Activated CD4-positive, alpha-beta memory T cell treated with anti-CD3 and anti-CD28 coated beads for 36 hours (primary cell): ENCODE measurements at regions of chr11 and their contacts with region 1.

Region 1: DNA sequence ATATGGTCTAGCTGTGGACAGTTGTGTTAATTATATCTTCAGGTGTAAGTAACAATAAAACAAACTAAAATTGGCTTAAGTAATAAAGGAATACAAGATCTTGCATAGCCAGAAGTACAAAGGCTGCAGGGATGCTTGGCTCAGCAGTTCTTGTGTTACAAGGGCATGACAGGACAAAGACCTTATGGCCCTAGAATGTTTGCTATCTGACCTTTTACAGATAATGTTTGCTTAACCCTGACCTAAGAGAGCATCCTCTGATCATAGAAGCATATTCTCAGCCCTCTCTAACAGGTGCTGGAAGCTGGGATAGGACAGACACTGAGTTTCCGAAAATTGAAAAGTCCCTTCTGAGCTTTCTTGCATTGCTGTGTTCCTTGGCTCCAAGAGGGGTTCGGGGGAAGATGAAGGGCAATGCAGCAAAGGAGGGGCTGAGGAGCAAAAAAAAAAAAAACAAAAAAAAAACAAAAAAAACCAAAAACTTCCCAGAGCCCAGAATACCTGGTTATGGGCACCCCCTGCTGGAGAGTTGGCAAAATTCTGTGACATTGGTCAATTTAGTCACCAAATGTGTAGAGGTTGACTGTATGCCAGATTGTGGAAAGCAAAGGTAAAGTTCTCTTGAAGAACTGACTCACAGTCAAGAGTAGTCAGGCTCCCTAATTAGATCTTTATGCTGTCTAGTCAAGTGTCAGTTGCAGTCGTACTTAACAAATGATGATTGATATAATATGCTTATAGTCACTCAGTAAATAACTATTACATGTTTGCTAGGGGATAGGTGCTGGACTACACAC is 10.4 kb upstream of the HIKESHI start:
- DNase-seq: peak; percentile 82
- H3K4me3 Mint-ChIP-seq: peak overlapping the region; percentile 30
- H3K27ac Mint-ChIP-seq: peak overlapping the region; percentile 95
- H3K4me1 Mint-ChIP-seq: peaks cover 68% of the 10 kb centered on the region
- H3K27me3 Mint-ChIP-seq: no peaks in the 10 kb centered on the region

Region 2: GRCh38 chr11:85947431-85948272 is 344.0 kb before region 1 on chr11:
- CTCF ChIA-PET with region 1: no interaction called
- POLR2A ChIA-PET with region 1: interaction called, 5 read pairs
- intact Hi-C with region 1: loop called (anchors 1 kb)
- DNase-seq: peak; percentile 59
- H3K4me3 Mint-ChIP-seq: peak overlapping the region; percentile 30
- H3K27ac Mint-ChIP-seq: peak overlapping the region; percentile 78
- H3K4me1 Mint-ChIP-seq: peaks cover 46% of the 10 kb centered on the region
- H3K27me3 Mint-ChIP-seq: no peaks in the 10 kb centered on the region

Region 3: DNA sequence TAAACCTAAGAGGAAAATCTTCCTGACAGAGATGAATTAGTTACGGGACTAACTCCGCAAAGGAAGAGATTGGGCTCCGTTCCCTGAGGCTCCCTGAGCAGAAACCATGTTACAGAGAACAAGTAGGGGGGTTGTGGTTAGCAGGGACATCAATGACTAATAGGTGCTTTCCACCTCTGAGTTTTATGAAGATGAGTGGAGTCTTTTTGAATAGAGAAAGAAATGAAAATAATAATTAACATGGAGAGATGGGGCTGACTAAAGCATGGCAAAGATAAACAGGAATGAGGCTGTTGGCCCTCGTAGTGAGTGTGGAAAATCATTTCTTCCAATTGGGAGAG is 175.3 kb before region 1 on chr11:
- CTCF ChIA-PET with region 1: no interaction called
- POLR2A ChIA-PET with region 1: interaction called, 3 read pairs
- intact Hi-C with region 1: loop called (anchors 1 kb)
- DNase-seq: peak; percentile 59
- H3K4me3 Mint-ChIP-seq: peak overlapping the region; percentile 40
- H3K27ac Mint-ChIP-seq: peak overlapping the region; percentile 44
- H3K4me1 Mint-ChIP-seq: peaks cover 34% of the 10 kb centered on the region
- H3K27me3 Mint-ChIP-seq: peaks cover 2% of the 10 kb centered on the region

Region 4: DNA sequence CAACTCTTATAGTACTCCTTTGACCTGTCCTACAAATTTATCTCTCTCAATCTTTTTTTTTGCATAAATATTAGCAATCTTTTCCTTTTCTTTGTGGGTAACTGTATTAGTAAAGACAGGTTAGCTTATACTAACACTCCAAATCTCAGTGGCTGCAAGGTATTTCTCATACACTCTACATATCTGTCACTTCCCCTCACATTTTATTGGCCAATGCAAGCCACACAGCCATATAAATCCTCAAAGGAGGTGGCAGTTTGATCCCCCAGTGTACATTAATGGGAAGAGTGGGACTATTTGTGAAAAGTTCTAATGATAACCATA is 89.7 kb before region 1 on chr11:
- CTCF ChIA-PET with region 1: interaction called, 3 read pairs
- POLR2A ChIA-PET with region 1: interaction called, 3 read pairs
- intact Hi-C with region 1: loop called (anchors 1 kb)
- DNase-seq: peak; percentile 38
- H3K4me3 Mint-ChIP-seq: no peak overlapping the region
- H3K27ac Mint-ChIP-seq: no peak overlapping the region
- H3K4me1 Mint-ChIP-seq: peaks cover 5% of the 10 kb centered on the region
- H3K27me3 Mint-ChIP-seq: no peaks in the 10 kb centered on the region

Region 5: GRCh38 chr11:86255896-86256295 is 35.8 kb before region 1 on chr11:
- CTCF ChIA-PET with region 1: interaction called, 5 read pairs
- POLR2A ChIA-PET with region 1: interaction called, 3 read pairs
- intact Hi-C with region 1: loop called (anchors 1 kb)
- DNase-seq: no peak
- H3K4me3 Mint-ChIP-seq: no peak overlapping the region
- H3K27ac Mint-ChIP-seq: peak overlapping the region; percentile 68
- H3K4me1 Mint-ChIP-seq: peaks cover 56% of the 10 kb centered on the region
- H3K27me3 Mint-ChIP-seq: no peaks in the 10 kb centered on the region

Region 6: GRCh38 chr11:86802601-86803051 is 511.0 kb after region 1 on chr11:
- CTCF ChIA-PET with region 1: interaction called, 4 read pairs
- POLR2A ChIA-PET with region 1: no interaction called
- intact Hi-C with region 1: loop called (anchors 1 kb)
- DNase-seq: peak; percentile 27
- H3K4me3 Mint-ChIP-seq: no peak overlapping the region
- H3K27ac Mint-ChIP-seq: no peak overlapping the region
- H3K4me1 Mint-ChIP-seq: peaks cover 57% of the 10 kb centered on the region
- H3K27me3 Mint-ChIP-seq: peaks cover 51% of the 10 kb centered on the region